PC-9 (cell line): ENCODE measurements at regions of chr7 and their contacts with region 1.

Region 1: GRCh38 chr7:128287556-128287955 is 46.5 kb downstream of the LEP start:
- DNase-seq: no peak
- H3K4me3 ChIP-seq: no peak overlapping the region
- H3K27ac ChIP-seq: no peak overlapping the region
- H3K4me1 ChIP-seq: no peaks in the 10 kb centered on the region
- H3K27me3 ChIP-seq: no peaks in the 10 kb centered on the region
- CTCF ChIP-seq: no peak

Region 2: GRCh38 chr7:127708788-127709187 is 578.8 kb before region 1 on chr7:
- CTCF ChIA-PET with region 1: no interaction called
- POLR2A ChIA-PET with region 1: no interaction called
- intact Hi-C with region 1: no loop called
- DNase-seq: peak; percentile 46 to 54
- H3K4me3 ChIP-seq: no peak overlapping the region
- H3K27ac ChIP-seq: no peak overlapping the region
- H3K4me1 ChIP-seq: no peaks in the 10 kb centered on the region
- H3K27me3 ChIP-seq: no peaks in the 10 kb centered on the region
- CTCF ChIP-seq: peak; percentile 82

Region 3: DNA sequence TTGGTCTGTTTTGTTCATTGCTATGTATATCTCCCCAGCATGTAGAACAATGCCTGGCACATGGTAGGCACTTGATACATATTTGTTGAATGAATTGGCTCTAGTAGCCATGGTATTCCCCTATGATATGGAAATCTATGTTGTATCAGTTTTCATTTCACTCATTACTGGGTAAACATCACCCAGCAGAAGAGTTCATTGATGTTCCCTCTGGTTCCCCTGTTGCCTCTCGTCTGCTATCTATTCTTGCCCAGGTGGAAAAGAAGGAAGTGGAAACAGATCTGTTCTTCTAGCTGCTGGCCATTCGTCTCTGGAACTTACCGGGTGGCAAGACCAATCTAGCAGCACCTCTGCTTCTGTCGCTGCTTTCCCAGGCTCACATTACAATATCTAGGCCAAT is 327.8 kb before region 1 on chr7:
- CTCF ChIA-PET with region 1: interaction called, 10 read pairs
- POLR2A ChIA-PET with region 1: no interaction called
- intact Hi-C with region 1: no loop called
- DNase-seq: no peak
- H3K4me3 ChIP-seq: no peak overlapping the region
- H3K27ac ChIP-seq: no peak overlapping the region
- H3K4me1 ChIP-seq: no peaks in the 10 kb centered on the region
- H3K27me3 ChIP-seq: no peaks in the 10 kb centered on the region
- CTCF ChIP-seq: no peak

Region 4: DNA sequence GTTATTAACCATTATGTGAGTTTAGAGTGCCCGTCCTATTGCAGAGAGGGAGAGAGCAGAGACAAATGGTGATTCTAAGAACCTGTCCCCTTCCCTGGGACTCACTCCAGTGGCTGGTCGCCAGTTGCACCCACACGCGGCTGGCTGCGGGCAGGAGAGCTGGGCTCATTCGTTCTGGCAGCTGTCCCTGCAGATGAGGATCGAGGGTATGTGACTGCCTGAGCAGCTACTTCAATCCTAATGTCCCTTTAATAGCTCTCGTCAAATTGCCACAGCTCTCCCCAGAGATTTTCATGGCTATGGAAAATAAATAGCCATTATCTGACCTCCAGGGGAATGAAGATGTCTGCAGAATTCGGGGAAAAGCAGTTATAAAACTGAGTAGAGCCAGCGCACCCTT is 14.6 kb after region 1 on chr7:
- CTCF ChIA-PET with region 1: no interaction called
- POLR2A ChIA-PET with region 1: no interaction called
- intact Hi-C with region 1: no loop called
- DNase-seq: no peak
- H3K4me3 ChIP-seq: no peak overlapping the region
- H3K27ac ChIP-seq: no peak overlapping the region
- H3K4me1 ChIP-seq: no peaks in the 10 kb centered on the region
- H3K27me3 ChIP-seq: no peaks in the 10 kb centered on the region
- CTCF ChIP-seq: no peak